GM12878 (cell line): ENCODE measurements at regions of chr6 and their contacts with region 1.

Region 1: DNA sequence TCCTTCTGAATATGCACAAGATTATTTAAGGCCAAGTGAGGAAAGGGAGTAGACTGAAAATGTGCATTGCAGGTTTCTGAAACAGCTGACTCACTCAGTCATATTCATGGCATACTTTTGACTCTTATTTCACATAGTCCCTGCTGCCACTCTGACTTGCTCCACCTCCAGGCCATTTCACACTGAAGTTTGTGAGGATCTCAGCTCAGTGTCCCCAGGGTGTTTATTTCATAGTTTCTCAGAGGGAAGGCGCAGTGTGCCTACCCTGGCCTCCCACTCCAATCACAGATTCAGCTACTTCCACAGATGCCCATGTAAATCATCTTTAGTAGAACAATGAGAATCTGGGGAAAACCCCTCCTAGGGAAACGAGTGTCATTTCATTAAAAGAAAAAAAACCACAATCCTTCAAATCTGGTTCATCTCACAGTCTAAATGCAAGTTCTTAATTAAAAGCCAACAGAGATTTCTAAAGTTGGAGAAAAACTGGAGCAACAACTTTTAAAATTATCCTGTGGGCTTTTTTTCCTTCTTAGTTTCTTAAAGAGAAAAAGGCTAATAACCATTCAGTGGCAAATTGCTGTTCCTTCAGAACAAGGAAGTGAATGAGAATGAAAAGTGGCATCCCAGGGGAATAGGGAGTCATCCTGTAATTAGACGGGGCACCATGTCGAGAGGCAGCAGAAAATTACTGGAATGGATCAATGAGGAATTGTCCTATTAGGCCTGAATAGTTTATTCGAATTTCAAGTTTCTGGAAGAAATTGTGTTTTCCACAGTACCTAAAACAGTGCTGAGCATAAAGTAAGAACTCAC is 133.6 kb downstream of the TFAP2B start:
- DNase-seq: no peak
- ATAC-seq: peak; percentile 84
- H3K4me3 ChIP-seq: no peak overlapping the region
- H3K27ac ChIP-seq: no peak overlapping the region
- H3K4me1 ChIP-seq: no peaks in the 10 kb centered on the region
- H3K27me3 ChIP-seq: no peaks in the 10 kb centered on the region
- CTCF ChIP-seq: no peak
- EP300 ChIP-seq: no peak
- POLR2A ChIP-seq: no peak
- RAD21 ChIP-seq: no peak

Region 2: GRCh38 chr6:50927800-50928199 is 24.5 kb before region 1 on chr6:
- CTCF ChIA-PET with region 1: no interaction called
- POLR2A ChIA-PET with region 1: no interaction called
- RAD21 ChIA-PET with region 1: no interaction called
- SMC1A ChIA-PET with region 1: no interaction called
- in situ Hi-C with region 1: no loop called
- intact Hi-C with region 1: no loop called
- DNase-seq: no peak
- ATAC-seq: no peak
- H3K4me3 ChIP-seq: no peak overlapping the region
- H3K27ac ChIP-seq: no peak overlapping the region
- H3K4me1 ChIP-seq: no peaks in the 10 kb centered on the region
- H3K27me3 ChIP-seq: no peaks in the 10 kb centered on the region
- CTCF ChIP-seq: no peak
- EP300 ChIP-seq: no peak
- POLR2A ChIP-seq: no peak
- RAD21 ChIP-seq: no peak

Region 3: GRCh38 chr6:50939931-50940330 is 12.4 kb before region 1 on chr6:
- CTCF ChIA-PET with region 1: no interaction called
- POLR2A ChIA-PET with region 1: no interaction called
- RAD21 ChIA-PET with region 1: no interaction called
- SMC1A ChIA-PET with region 1: no interaction called
- in situ Hi-C with region 1: no loop called
- intact Hi-C with region 1: no loop called
- DNase-seq: no peak
- ATAC-seq: no peak
- H3K4me3 ChIP-seq: no peak overlapping the region
- H3K27ac ChIP-seq: no peak overlapping the region
- H3K4me1 ChIP-seq: no peaks in the 10 kb centered on the region
- H3K27me3 ChIP-seq: no peaks in the 10 kb centered on the region
- CTCF ChIP-seq: no peak
- EP300 ChIP-seq: no peak
- POLR2A ChIP-seq: no peak
- RAD21 ChIP-seq: no peak

Region 4: DNA sequence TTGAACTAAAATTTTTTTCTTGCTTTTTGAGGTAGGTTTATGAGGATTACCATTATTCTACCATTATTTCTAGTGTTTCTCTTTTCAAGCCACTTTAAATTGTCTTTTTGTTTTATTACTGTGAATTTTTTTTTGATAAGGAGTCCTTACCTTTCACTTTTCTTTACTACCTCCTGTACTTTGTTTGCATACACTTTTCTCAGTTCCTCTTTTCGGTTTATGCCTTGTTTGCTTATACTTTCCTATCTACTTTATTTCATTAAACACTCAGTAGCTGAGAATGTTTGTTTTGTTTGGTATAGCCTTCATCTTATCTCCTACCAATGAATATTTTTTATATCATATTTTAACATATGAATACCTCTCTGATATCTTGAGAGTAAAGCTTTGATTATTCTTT is 14.2 kb after region 1 on chr6:
- CTCF ChIA-PET with region 1: no interaction called
- POLR2A ChIA-PET with region 1: no interaction called
- RAD21 ChIA-PET with region 1: no interaction called
- SMC1A ChIA-PET with region 1: no interaction called
- in situ Hi-C with region 1: no loop called
- intact Hi-C with region 1: loop called (anchors 2 kb)
- DNase-seq: no peak
- ATAC-seq: peak; percentile 93
- H3K4me3 ChIP-seq: no peak overlapping the region
- H3K27ac ChIP-seq: no peak overlapping the region
- H3K4me1 ChIP-seq: peaks cover 4% of the 10 kb centered on the region; the same call in 1 of the 2 replicates
- H3K27me3 ChIP-seq: no peaks in the 10 kb centered on the region
- CTCF ChIP-seq: no peak
- EP300 ChIP-seq: peak; percentile 13 to 78; a peak in 2 of 4 replicates
- POLR2A ChIP-seq: no peak
- RAD21 ChIP-seq: no peak